Right cardiac atrium (tissue), 5 donors: ENCODE measurements at regions of chr9 and their contacts with region 1.

Region 1: DNA sequence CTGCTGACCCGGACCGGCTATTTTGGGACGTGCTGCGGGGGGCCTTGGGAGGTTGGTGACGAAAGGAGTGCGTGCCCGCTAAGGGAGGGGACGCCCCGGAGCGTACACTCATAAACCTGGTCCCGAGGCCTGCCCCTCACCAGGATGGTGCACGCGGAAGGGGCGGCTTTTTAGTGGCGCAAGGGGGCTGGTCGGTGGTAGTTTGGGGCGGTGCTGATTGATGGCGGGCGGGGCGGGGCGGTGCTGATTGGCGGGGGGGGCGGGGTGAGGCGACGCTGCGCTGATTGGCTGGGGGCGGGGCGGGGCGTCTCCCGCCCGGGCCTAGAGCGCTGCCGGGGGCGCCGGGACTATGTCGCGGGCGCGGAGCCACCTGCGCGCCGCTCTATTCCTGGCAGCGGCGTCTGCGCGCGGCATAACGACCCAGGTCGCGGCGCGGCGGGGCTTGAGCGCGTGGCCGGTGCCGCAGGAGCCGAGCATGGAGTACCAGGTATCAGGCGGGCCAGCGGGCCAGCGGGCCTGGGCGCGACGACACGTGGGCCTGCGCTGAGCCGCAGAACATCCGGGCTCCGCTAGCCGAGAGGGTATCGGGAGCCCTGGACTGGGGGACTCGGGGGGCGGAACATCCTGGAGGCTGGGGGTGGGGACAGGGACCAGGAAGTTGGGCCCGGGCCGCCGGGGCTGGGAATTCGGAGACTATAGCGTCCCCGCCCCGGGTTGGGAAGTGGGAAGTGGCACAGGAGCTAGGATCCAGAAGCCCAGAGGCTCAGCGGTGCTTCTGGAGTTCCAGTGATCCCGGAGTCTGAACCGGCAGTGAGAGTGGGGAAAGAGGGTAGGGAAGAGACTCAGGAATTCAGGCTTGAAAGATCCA is at the start of gene FPGS:
- DNase-seq: peak; percentile 95 to 97 (median 96)
- ATAC-seq: peak; percentile 92 to 94
- H3K4me3 ChIP-seq: peak within 1 kb of the TSS; percentile 87
- H3K27ac ChIP-seq: peak within 1 kb of the TSS; percentile 97
- H3K4me1 ChIP-seq: peaks cover 4% of the 10 kb centered on the region
- H3K27me3 ChIP-seq: no peaks in the 10 kb centered on the region
- total RNA-seq, gene FPGS: 34.1 to 53.1 (median 45.6) TPM

Region 2: GRCh38 chr9:127869310-127870152 is 66.7 kb after region 1 on chr9:
- intact Hi-C with region 1: loop called in 2 of 4 experiments (anchors 10 kb)
- DNase-seq: peak; percentile 92 to 97 (median 95)
- ATAC-seq: peak; percentile 64 to 69
- H3K4me3 ChIP-seq: no peak overlapping the region
- H3K27ac ChIP-seq: peak overlapping the region; percentile 59
- H3K4me1 ChIP-seq: peaks cover 4% of the 10 kb centered on the region
- H3K27me3 ChIP-seq: no peaks in the 10 kb centered on the region

Region 3: GRCh38 chr9:128007566-128008138 is 204.8 kb after region 1 on chr9:
- intact Hi-C with region 1: no loop called
- DNase-seq: peak; percentile 29 to 76 (median 75)
- ATAC-seq: peak in 1 of 2 donors; percentile 39
- H3K4me3 ChIP-seq: no peak overlapping the region
- H3K27ac ChIP-seq: no peak overlapping the region
- H3K4me1 ChIP-seq: no peaks in the 10 kb centered on the region
- H3K27me3 ChIP-seq: no peaks in the 10 kb centered on the region